ENCODE measurements at regions of chr1 and their contacts with region 1.

Region 1: GRCh38 chr1:151443846-151444782 is 15.2 kb downstream of the POGZ start:
- DNase-seq: peak; percentile 17 to 73 (median 66)
- ATAC-seq: peak; percentile 98
- H3K4me3 ChIP-seq: no peak overlapping the region
- H3K4me3 Mint-ChIP-seq: peak overlapping the region in 1 of 10 donors; percentile 8
- H3K27ac ChIP-seq: no peak overlapping the region
- H3K27ac Mint-ChIP-seq: peak overlapping the region in 3 of 9 donors; percentile 29 to 61 (median 44)
- H3K4me1 ChIP-seq: peaks cover 0 to 4% of the 10 kb centered on the region in 2 donors
- H3K4me1 Mint-ChIP-seq: peaks cover 24 to 76% (median 60%) of the 10 kb centered on the region in 7 donors
- H3K27me3 ChIP-seq: no peaks in the 10 kb centered on the region
- H3K27me3 Mint-ChIP-seq: no peaks in the 10 kb centered on the region

Region 2: GRCh38 chr1:150836129-150836773 is 607.9 kb before region 1 on chr1:
- CTCF ChIA-PET with region 1: no interaction called
- POLR2A ChIA-PET with region 1: no interaction called
- intact Hi-C with region 1: no loop called
- DNase-seq: no peak
- ATAC-seq: no peak
- H3K4me3 ChIP-seq: no peak overlapping the region
- H3K4me3 Mint-ChIP-seq: no peak overlapping the region
- H3K27ac ChIP-seq: no peak overlapping the region
- H3K27ac Mint-ChIP-seq: peak overlapping the region in 1 of 9 donors; percentile 39
- H3K4me1 ChIP-seq: peaks cover 0 to 13% of the 10 kb centered on the region in 2 donors
- H3K4me1 Mint-ChIP-seq: peaks cover 10 to 32% (median 23%) of the 10 kb centered on the region in 7 donors
- H3K27me3 ChIP-seq: no peaks in the 10 kb centered on the region
- H3K27me3 Mint-ChIP-seq: no peaks in the 10 kb centered on the region

Region 3: DNA sequence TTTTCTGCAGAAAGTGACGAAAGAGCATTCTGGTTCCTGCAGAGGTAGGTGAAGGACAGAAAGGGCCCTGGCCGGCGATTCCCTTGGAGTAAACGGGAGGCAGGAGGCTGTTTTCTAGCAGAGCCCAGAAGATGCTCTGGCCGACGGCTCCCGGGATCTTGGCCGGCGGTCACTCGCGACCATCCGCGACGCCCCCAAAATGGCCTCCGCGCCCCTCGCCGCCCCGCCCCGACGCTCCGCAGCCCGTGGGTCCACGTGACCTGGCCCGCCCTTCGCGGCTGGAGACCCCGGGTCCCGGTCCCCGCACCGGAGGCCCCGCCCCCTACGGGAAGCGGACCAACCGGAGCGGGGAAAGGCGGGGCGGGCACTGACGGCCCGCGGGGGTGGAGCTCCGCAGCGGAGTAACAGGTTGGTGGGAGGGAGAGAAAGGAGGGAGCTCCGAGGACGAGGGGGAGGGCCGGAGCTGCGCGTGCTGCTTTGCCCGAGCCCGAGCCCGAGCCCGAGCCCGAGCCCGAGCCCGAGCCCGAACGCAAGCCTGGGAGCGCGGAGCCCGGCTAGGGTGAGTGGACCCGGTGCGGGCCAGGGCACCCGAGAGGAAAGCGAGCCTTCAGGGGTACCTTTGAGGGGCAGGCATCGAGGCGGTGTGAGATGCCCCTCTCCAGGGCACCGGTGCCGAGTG is 67.0 kb after region 1 on chr1 and contains the start of gene CGN:
- CTCF ChIA-PET with region 1: interaction called, 4 read pairs
- POLR2A ChIA-PET with region 1: interaction called, 9 read pairs
- intact Hi-C with region 1: loop called in 1 of 2 experiments (anchors 5 kb)
- DNase-seq: peak; percentile 72 to 90 (median 84)
- ATAC-seq: peak; percentile 99
- H3K4me3 ChIP-seq: peak within 1 kb of the TSS; percentile 89
- H3K4me3 Mint-ChIP-seq: peak within 1 kb of the TSS; percentile 90 to 99 (median 94)
- H3K27ac ChIP-seq: peak within 1 kb of the TSS; percentile 65
- H3K27ac Mint-ChIP-seq: peak within 1 kb of the TSS; percentile 38 to 93 (median 86)
- H3K4me1 ChIP-seq: peaks cover 13 to 18% of the 10 kb centered on the region in 2 donors
- H3K4me1 Mint-ChIP-seq: peaks cover 12 to 36% (median 25%) of the 10 kb centered on the region in 7 donors
- H3K27me3 ChIP-seq: no peaks in the 10 kb centered on the region
- H3K27me3 Mint-ChIP-seq: peaks cover 0 to 38% (median 0%) of the 10 kb centered on the region in 5 donors
- total RNA-seq, gene CGN: 0.29 to 2.4 (median 1.3) TPM in 4 of 5 experiments, not detected in the other

Region 4: GRCh38 chr1:151534665-151535278 is 90.7 kb after region 1 on chr1:
- CTCF ChIA-PET with region 1: interaction called, 3 read pairs
- POLR2A ChIA-PET with region 1: interaction called, 3 read pairs
- intact Hi-C with region 1: loop called in 1 of 2 experiments (anchors 2 kb)
- DNase-seq: peak; percentile 28 to 78 (median 59)
- ATAC-seq: peak; percentile 88
- H3K4me3 ChIP-seq: no peak overlapping the region
- H3K4me3 Mint-ChIP-seq: no peak overlapping the region
- H3K27ac ChIP-seq: no peak overlapping the region
- H3K27ac Mint-ChIP-seq: peak overlapping the region in 1 of 9 donors; percentile 67
- H3K4me1 ChIP-seq: peaks cover 6% of the 10 kb centered on the region in 2 donors
- H3K4me1 Mint-ChIP-seq: peaks cover 0 to 8% (median 3%) of the 10 kb centered on the region in 7 donors
- H3K27me3 ChIP-seq: no peaks in the 10 kb centered on the region
- H3K27me3 Mint-ChIP-seq: peaks cover 0 to 4% (median 0%) of the 10 kb centered on the region in 5 donors

Region 5: DNA sequence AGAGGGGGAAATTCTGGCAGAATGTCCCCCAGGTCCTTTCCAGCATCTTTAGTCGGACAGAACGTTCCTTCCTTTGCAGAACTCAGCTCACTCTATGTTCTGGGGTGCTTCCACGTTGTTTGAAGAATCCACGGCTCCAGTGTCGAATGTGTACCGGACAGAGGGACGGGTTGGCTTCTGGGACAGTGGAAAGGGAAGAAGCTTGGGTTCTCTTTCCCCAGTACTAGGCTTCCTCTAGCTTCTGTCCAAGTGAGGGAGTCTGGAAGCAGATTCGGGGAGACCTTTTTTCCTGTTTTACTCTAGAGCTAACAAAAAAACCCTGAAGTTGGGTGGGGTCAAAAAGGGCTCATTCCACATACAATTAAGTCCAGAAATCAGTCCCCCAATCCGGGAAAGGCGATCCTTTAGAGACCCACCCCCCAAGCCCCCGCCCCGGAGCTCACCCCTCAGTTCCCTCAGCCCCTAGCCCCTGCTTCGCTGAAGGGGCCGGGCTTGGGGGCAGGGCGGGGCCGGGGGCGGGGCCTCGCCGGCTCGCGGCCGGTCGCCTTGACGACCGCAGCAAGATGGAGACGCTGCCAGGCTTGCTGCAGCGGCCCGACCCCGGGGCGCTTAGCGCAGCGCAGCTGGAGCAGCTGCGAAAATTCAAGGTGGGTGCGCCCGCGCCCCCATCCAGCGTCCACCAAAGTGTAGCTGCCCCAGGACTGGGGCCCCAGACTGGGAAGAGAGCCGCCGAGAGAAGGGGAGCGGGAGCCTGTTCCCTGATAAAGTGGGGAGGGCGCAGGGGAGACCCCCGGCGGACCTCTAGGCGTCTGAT is 277.1 kb after region 1 on chr1 and contains the start of gene RIIAD1:
- CTCF ChIA-PET with region 1: no interaction called
- POLR2A ChIA-PET with region 1: no interaction called
- intact Hi-C with region 1: loop called in 1 of 2 experiments (anchors 5 kb)
- DNase-seq: peak in 8 of 9 donors; percentile 17 to 47 (median 40)
- ATAC-seq: peak; percentile 85
- H3K4me3 ChIP-seq: peak within 1 kb of the TSS; percentile 71
- H3K4me3 Mint-ChIP-seq: peak within 1 kb of the TSS; percentile 71 to 85 (median 83)
- H3K27ac ChIP-seq: no peak within 1 kb of the TSS
- H3K27ac Mint-ChIP-seq: peak within 1 kb of the TSS in 8 of 9 donors; percentile 11 to 85 (median 36)
- H3K4me1 ChIP-seq: peaks cover 9 to 14% of the 10 kb centered on the region in 2 donors
- H3K4me1 Mint-ChIP-seq: peaks cover 17 to 41% (median 26%) of the 10 kb centered on the region in 7 donors
- H3K27me3 ChIP-seq: peaks cover 4 to 6% of the 10 kb centered on the region in 2 donors
- H3K27me3 Mint-ChIP-seq: peaks cover 54 to 88% (median 65%) of the 10 kb centered on the region in 5 donors
- total RNA-seq, gene RIIAD1: not detected

Region 6: DNA sequence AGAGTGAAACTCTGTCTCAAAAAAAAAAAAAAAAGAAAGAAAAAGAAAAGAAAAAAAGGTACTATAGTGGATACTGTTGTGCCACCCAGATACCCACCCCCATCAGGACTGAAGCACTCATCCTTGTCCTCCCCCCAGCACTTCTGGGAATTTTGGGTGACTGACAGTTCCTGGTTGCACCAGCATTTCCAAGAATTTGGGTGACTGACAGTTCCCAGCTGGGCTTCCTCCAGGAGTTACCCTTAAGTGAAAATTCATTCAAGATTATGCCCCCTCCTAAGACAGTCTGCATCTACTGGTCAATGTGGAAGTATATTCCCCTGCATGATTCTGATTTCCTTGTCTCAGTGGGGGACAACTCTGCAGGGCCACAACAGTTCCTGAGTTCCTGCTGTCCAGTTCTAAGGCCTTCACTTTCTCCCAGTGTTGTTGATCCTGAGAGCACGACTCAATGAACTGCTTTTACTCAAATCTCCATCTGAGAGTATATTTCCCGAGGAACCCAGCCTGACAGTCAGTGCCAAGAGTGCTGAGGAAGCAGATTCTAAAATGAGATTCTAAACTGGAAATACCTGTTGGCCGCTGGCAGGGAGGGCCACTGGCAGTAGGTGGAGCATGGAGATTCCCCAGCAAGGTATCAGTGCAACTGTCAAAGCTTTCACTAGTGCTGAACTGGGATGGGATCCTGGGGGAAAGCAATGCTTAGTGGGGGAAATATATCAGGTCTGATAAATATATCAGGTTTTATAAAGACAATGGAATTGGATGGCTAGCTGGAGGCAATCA is 295.7 kb after region 1 on chr1:
- CTCF ChIA-PET with region 1: interaction called, 8 read pairs
- POLR2A ChIA-PET with region 1: no interaction called
- intact Hi-C with region 1: loop called (anchors 1 kb)
- DNase-seq: no peak
- ATAC-seq: no peak
- H3K4me3 ChIP-seq: no peak overlapping the region
- H3K4me3 Mint-ChIP-seq: no peak overlapping the region
- H3K27ac ChIP-seq: no peak overlapping the region
- H3K27ac Mint-ChIP-seq: no peak overlapping the region
- H3K4me1 ChIP-seq: no peaks in the 10 kb centered on the region
- H3K4me1 Mint-ChIP-seq: peaks cover 0 to 10% (median 0%) of the 10 kb centered on the region in 7 donors
- H3K27me3 ChIP-seq: no peaks in the 10 kb centered on the region
- H3K27me3 Mint-ChIP-seq: peaks cover 0 to 25% (median 0%) of the 10 kb centered on the region in 5 donors

Region 7: DNA sequence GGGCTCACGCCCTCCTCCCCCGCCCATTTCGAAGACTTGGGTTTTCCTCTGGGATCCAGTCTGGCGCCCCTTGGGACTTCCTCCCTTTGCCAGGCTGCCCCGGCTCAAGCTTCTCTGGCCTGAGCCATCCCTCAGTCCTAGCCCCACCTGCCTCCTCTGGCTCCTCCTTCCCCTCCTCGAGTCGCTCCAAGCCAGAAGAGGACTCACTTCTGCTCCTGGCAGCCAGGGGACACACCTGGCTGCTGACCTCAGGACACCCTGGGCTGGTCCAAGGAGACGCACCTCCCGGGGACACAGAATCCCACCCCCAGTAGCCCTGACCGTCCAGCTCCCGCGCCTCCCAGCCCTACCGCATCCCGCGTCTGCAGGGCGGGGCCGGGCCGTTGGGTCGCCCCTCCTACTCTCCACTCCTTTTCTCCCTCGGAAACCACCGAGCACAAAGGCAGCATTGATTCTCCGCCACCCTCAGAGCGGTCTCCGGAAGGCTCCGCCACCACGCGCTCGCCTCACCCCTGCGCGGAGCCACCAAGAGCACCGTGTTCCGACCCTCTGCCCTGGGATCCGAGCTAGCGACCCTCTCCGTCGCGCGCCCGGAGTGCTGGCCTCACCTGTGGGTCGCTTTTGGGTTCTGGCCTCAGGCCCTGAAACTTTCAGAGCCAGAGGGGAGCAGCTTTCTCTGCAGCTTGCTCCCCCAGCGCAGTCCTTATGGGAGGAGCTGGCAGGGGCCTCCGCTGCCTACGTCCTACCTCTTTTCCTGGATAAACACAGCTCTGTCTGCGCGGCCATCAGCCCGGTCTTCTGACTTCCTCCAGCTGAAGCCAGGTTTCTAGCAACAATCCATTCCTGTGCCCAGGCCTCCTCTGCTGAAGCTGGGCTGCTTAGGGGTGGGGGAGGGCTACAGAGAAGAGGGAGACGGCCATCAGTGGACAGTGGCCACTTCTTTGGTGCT is 395.6 kb after region 1 on chr1 and contains the start of gene C2CD4D:
- CTCF ChIA-PET with region 1: interaction called, 5 read pairs
- POLR2A ChIA-PET with region 1: no interaction called
- intact Hi-C with region 1: loop called in 1 of 2 experiments (anchors 2 kb)
- DNase-seq: peak; percentile 42 to 77 (median 66)
- ATAC-seq: peak; percentile 89
- H3K4me3 ChIP-seq: peak within 1 kb of the TSS; percentile 68
- H3K4me3 Mint-ChIP-seq: peak within 1 kb of the TSS; percentile 68 to 89 (median 82)
- H3K27ac ChIP-seq: peak within 1 kb of the TSS; percentile 55
- H3K27ac Mint-ChIP-seq: peak within 1 kb of the TSS; percentile 31 to 87 (median 77)
- H3K4me1 ChIP-seq: peaks cover 27 to 38% of the 10 kb centered on the region in 2 donors
- H3K4me1 Mint-ChIP-seq: peaks cover 33 to 53% (median 40%) of the 10 kb centered on the region in 7 donors
- H3K27me3 ChIP-seq: no peaks in the 10 kb centered on the region
- H3K27me3 Mint-ChIP-seq: peaks cover 0 to 8% (median 0%) of the 10 kb centered on the region in 5 donors
- total RNA-seq, gene C2CD4D: 0.34 to 0.87 TPM in 2 of 5 experiments, not detected in the others